ENCODE measurements at regions of chr17 and their contacts with region 1.

Region 1: DNA sequence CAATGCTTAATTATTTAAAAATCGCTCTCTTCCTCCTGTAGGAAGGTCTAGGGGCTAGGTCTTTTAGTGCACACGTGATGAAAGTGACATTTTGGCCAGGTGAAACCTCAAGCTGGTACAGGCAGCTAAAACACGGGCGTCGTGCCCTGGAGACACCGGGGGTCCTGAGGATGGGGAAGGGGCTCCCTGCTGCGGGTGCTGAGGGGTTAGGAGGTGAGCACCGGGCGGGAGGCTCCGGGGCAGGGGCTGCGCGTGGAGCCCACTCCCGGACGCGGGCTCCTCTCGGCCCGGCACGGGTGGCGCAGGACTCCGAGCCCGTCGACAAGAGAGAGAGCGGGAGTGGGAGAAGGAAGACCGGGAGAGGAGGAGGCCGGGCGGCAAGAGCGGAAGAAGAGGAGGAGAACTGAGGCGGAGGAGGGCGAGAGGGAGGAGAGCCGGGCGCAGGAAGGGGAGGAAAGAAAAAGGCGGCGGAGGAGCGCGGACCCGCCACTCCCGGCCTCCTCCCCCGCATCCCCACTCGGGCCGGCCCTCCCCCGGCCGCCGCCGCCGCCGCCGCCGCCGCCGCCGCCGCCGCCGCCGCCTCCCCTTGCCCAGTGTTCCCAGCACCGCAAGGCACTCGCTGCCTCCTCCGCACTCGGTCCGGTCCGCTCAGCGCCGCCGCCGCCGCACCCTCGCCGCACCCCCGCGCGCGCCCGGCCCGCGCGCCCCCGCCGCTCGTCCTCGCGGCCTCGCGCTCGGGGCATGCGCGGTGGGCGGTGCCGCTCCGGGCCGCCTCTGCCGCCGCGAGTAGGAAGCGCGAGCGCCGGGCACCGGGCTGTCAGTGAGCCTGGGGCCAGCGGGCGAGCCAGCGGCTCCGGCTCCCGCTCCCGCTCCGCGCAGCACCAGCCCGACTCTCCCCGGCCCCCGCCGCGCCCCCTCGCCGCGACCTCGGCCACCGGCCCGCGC is at the start of gene PRKCA:
- DNase-seq: peak; percentile 43 to 83 (median 63)
- H3K4me3 ChIP-seq: peak within 1 kb of the TSS; percentile 61 to 97 (median 89)
- H3K27ac ChIP-seq: peak within 1 kb of the TSS in 58 of 59 donors; percentile 2 to 91 (median 79)
- H3K27me3 ChIP-seq: no peaks in the 10 kb centered on the region
- CTCF ChIP-seq: no peak
- total RNA-seq, gene PRKCA: 90.6 to 208 (median 152) TPM

Region 2: GRCh38 chr17:66459811-66460270 is 157.8 kb after region 1 on chr17:
- intact Hi-C with region 1: loop called (anchors 10 kb)
- DNase-seq: peak in 1 of 10 donors; percentile 34
- H3K4me3 ChIP-seq: no peak overlapping the region
- H3K27ac ChIP-seq: peak overlapping the region in 21 of 59 donors; percentile 2 to 73 (median 27)
- H3K27me3 ChIP-seq: no peaks in the 10 kb centered on the region
- CTCF ChIP-seq: no peak

Region 3: GRCh38 chr17:66526827-66527226 is 224.8 kb after region 1 on chr17:
- intact Hi-C with region 1: loop called in 1 of 2 experiments (anchors 5 kb)
- DNase-seq: peak in 2 of 10 donors; percentile 26 to 58
- H3K4me3 ChIP-seq: peak overlapping the region in 7 of 59 donors; percentile 1 to 24 (median 17)
- H3K27ac ChIP-seq: peak overlapping the region in 58 of 59 donors; percentile 16 to 94 (median 79)
- H3K27me3 ChIP-seq: no peaks in the 10 kb centered on the region
- CTCF ChIP-seq: no peak

Region 4: GRCh38 chr17:66625311-66625775 is 323.3 kb after region 1 on chr17:
- intact Hi-C with region 1: loop called in 1 of 2 experiments (anchors 10 kb)
- DNase-seq: no peak
- H3K4me3 ChIP-seq: no peak overlapping the region
- H3K27ac ChIP-seq: no peak overlapping the region
- H3K27me3 ChIP-seq: no peaks in the 10 kb centered on the region
- CTCF ChIP-seq: peak; percentile 19 to 79 (median 66)

Measured in dorsolateral prefrontal cortex (tissue), 120 donors.